ENCODE measurements at regions of chr7 and their contacts with region 1.

Region 1: DNA sequence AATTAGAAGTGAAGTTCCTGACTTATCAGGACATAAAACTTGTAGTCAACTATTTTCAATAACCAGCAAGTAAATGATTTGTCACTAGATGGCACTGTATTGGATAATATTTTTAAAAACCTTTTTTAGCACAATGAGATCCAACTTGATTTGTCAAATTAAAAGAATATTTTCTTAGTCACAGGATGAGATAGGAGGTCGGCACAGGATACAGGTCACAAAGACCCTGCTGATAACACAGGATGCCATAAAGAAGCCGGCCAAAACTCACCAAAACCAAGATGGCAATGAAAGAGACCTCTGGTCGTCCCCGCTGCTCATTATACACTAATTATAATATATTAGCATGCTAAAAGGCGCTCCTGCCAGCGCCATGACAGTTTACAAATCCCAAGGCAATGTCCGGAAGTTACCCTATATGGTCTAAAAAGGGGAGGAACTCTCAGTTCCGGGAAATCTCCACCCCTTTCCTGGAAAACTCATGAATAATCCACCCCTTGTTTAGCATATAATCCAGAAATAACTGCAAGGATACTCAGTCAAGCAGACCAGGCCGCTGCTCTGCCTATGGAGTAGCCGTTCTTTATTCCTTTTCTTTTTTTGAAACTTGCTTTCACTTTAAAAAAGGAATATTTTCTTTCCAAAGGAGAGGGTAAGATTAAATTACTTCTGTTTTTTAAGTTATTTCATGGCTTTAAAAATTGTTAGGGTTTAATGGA is 255.7 kb upstream of the MKLN1 start:
- DNase-seq: no peak
- ATAC-seq: no peak
- H3K4me3 ChIP-seq: no peak overlapping the region
- H3K4me3 Mint-ChIP-seq: peak overlapping the region in 5 of 10 donors; percentile 14 to 54 (median 45)
- H3K27ac ChIP-seq: no peak overlapping the region
- H3K27ac Mint-ChIP-seq: peak overlapping the region in 7 of 9 donors; percentile 39 to 67 (median 52)
- H3K4me1 ChIP-seq: peaks cover 39 to 69% of the 10 kb centered on the region in 2 donors
- H3K4me1 Mint-ChIP-seq: peaks cover 33 to 72% (median 55%) of the 10 kb centered on the region in 7 donors
- H3K27me3 ChIP-seq: no peaks in the 10 kb centered on the region
- H3K27me3 Mint-ChIP-seq: no peaks in the 10 kb centered on the region

Region 2: DNA sequence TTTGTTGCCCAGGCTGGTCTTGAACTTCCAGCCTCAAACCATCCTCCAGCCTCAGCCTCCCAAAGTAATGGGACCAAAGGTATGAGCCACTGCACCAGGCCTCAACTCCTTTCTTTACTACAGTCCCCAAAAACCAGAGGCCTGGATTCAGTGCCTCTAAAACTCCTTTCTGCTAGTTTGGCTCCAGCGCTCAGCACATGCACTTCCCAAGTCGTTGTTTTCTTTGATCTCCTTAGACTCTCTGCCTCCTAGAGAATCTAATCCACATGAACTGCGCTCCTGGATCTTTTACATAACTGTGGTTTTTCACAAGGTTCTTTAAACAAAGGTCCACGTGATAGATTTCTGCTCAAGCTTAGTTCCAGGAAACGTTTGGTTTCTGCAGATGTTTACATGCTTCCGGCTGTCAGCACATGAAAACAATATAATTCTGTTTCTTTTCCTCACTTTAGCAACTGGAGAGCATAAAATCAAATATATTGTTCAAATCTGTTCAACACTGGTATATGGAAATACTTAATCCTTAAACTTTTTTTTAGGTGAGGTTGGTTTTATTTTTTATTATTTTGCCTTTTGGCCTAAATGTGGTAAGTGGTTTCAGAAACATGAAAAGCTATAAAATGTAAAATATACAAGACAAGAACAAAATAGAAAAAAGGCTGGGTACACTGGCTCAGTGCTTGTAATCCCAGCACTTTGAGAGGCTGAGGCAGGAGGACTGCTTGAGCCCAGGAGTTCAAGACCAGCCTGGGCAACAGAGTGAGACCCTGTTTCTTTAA is 14.7 kb before region 1 on chr7:
- CTCF ChIA-PET with region 1: interaction called, 3 read pairs
- POLR2A ChIA-PET with region 1: interaction called, 6 read pairs
- intact Hi-C with region 1: loop called in 1 of 2 experiments (anchors 2 kb)
- DNase-seq: peak in 7 of 9 donors; percentile 56 to 82 (median 76)
- ATAC-seq: peak; percentile 67
- H3K4me3 ChIP-seq: peak overlapping the region; percentile 11
- H3K4me3 Mint-ChIP-seq: peak overlapping the region; percentile 72 to 93 (median 82)
- H3K27ac ChIP-seq: peak overlapping the region; percentile 76
- H3K27ac Mint-ChIP-seq: peak overlapping the region; percentile 94 to 100 (median 98)
- H3K4me1 ChIP-seq: peaks cover 69 to 77% of the 10 kb centered on the region in 2 donors
- H3K4me1 Mint-ChIP-seq: peaks cover 54 to 87% (median 72%) of the 10 kb centered on the region in 7 donors
- H3K27me3 ChIP-seq: no peaks in the 10 kb centered on the region
- H3K27me3 Mint-ChIP-seq: no peaks in the 10 kb centered on the region

Region 3: GRCh38 chr7:131090886-131091692 is 19.1 kb after region 1 on chr7:
- CTCF ChIA-PET with region 1: no interaction called
- POLR2A ChIA-PET with region 1: interaction called, 3 read pairs
- intact Hi-C with region 1: loop called in 1 of 2 experiments (anchors 2 kb)
- DNase-seq: no peak
- ATAC-seq: peak; percentile 18
- H3K4me3 ChIP-seq: no peak overlapping the region
- H3K4me3 Mint-ChIP-seq: peak overlapping the region in 9 of 10 donors; percentile 1 to 55 (median 23)
- H3K27ac ChIP-seq: no peak overlapping the region
- H3K27ac Mint-ChIP-seq: peak overlapping the region in 7 of 9 donors; percentile 8 to 81 (median 60)
- H3K4me1 ChIP-seq: peaks cover 22 to 39% of the 10 kb centered on the region in 2 donors
- H3K4me1 Mint-ChIP-seq: peaks cover 20 to 90% (median 73%) of the 10 kb centered on the region in 7 donors
- H3K27me3 ChIP-seq: no peaks in the 10 kb centered on the region
- H3K27me3 Mint-ChIP-seq: no peaks in the 10 kb centered on the region

Region 4: GRCh38 chr7:131151034-131151433 is 79.1 kb after region 1 on chr7:
- CTCF ChIA-PET with region 1: no interaction called
- POLR2A ChIA-PET with region 1: no interaction called
- intact Hi-C with region 1: no loop called
- DNase-seq: no peak
- ATAC-seq: no peak
- H3K4me3 ChIP-seq: no peak overlapping the region
- H3K4me3 Mint-ChIP-seq: no peak overlapping the region
- H3K27ac ChIP-seq: no peak overlapping the region
- H3K27ac Mint-ChIP-seq: no peak overlapping the region
- H3K4me1 ChIP-seq: no peaks in the 10 kb centered on the region
- H3K4me1 Mint-ChIP-seq: peaks cover 0 to 5% (median 0%) of the 10 kb centered on the region in 7 donors
- H3K27me3 ChIP-seq: no peaks in the 10 kb centered on the region
- H3K27me3 Mint-ChIP-seq: peaks cover 0 to 27% (median 0%) of the 10 kb centered on the region in 5 donors

Region 5: DNA sequence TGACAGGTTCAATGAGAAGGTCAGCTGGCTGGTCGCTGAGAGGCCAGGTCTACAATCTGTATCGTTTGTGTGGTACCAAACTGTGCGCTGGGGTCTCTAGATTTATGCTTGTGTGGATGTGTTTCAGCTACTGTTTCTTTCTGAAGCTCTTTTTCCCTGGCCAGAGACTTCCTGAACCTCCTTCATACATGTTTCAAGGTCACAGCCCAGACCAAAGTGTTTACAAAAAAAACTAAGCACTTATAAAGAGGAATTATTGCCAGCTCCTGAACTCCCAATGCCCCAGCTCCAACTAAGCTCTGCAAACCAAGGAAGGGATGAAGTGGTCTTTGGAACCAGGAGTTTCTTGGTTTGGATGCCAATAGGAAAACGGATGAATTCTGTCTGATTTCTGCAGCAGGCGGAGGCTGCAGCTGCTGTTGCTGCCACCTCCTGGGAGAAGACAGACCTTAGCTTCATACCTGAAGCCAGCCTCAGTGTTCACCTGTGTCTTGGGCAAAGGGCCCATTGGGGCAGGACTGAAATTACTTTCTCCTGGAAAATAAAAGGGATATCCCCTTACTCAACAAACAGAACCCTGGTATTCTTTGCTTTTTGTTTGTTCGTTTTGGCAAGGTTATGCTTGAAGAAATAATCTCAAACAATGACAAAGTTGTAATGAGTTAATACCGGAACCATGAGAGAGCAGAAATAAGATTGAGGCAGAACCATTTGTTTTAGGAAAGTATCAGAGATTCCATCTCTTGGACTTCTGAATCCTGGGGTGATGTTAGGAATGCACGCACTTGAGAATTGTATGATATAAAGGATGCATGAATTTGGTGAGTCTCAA is 231.1 kb after region 1 on chr7:
- CTCF ChIA-PET with region 1: interaction called, 4 read pairs
- POLR2A ChIA-PET with region 1: no interaction called
- intact Hi-C with region 1: loop called (anchors 1 kb)
- DNase-seq: peak in 6 of 9 donors; percentile 16 to 34 (median 24)
- ATAC-seq: peak; percentile 45
- H3K4me3 ChIP-seq: no peak overlapping the region
- H3K4me3 Mint-ChIP-seq: no peak overlapping the region
- H3K27ac ChIP-seq: no peak overlapping the region
- H3K27ac Mint-ChIP-seq: peak overlapping the region in 1 of 9 donors; percentile 68
- H3K4me1 ChIP-seq: no peaks in the 10 kb centered on the region
- H3K4me1 Mint-ChIP-seq: no peaks in the 10 kb centered on the region
- H3K27me3 ChIP-seq: no peaks in the 10 kb centered on the region
- H3K27me3 Mint-ChIP-seq: peaks cover 0 to 4% (median 0%) of the 10 kb centered on the region in 5 donors

Region 6: GRCh38 chr7:131327626-131328376 is 255.9 kb after region 1 on chr7 and contains the start of gene MKLN1:
- CTCF ChIA-PET with region 1: interaction called, 3 read pairs
- POLR2A ChIA-PET with region 1: interaction called, 7 read pairs
- intact Hi-C with region 1: loop called in 1 of 2 experiments (anchors 2 kb)
- DNase-seq: peak; percentile 82 to 91 (median 86)
- ATAC-seq: peak; percentile 99
- H3K4me3 ChIP-seq: peak within 1 kb of the TSS; percentile 88
- H3K4me3 Mint-ChIP-seq: peak within 1 kb of the TSS; percentile 88 to 100 (median 94)
- H3K27ac ChIP-seq: peak within 1 kb of the TSS; percentile 94
- H3K27ac Mint-ChIP-seq: peak within 1 kb of the TSS; percentile 86 to 99 (median 97)
- H3K4me1 ChIP-seq: peaks cover 26 to 43% of the 10 kb centered on the region in 2 donors
- H3K4me1 Mint-ChIP-seq: peaks cover 35 to 85% (median 71%) of the 10 kb centered on the region in 7 donors
- H3K27me3 ChIP-seq: no peaks in the 10 kb centered on the region
- H3K27me3 Mint-ChIP-seq: no peaks in the 10 kb centered on the region
- total RNA-seq, gene MKLN1: 42.0 to 69.8 (median 59.3) TPM

Region 7: GRCh38 chr7:131424219-131424822 is 352.4 kb after region 1 on chr7:
- CTCF ChIA-PET with region 1: interaction called, 3 read pairs
- POLR2A ChIA-PET with region 1: no interaction called
- intact Hi-C with region 1: loop called (anchors 1 kb)
- DNase-seq: peak in 7 of 9 donors; percentile 18 to 50 (median 44)
- ATAC-seq: peak; percentile 90
- H3K4me3 ChIP-seq: no peak overlapping the region
- H3K4me3 Mint-ChIP-seq: no peak overlapping the region
- H3K27ac ChIP-seq: no peak overlapping the region
- H3K27ac Mint-ChIP-seq: peak overlapping the region in 2 of 9 donors; percentile 11
- H3K4me1 ChIP-seq: no peaks in the 10 kb centered on the region
- H3K4me1 Mint-ChIP-seq: peaks cover 0 to 20% (median 13%) of the 10 kb centered on the region in 7 donors
- H3K27me3 ChIP-seq: no peaks in the 10 kb centered on the region
- H3K27me3 Mint-ChIP-seq: no peaks in the 10 kb centered on the region

Region 8: DNA sequence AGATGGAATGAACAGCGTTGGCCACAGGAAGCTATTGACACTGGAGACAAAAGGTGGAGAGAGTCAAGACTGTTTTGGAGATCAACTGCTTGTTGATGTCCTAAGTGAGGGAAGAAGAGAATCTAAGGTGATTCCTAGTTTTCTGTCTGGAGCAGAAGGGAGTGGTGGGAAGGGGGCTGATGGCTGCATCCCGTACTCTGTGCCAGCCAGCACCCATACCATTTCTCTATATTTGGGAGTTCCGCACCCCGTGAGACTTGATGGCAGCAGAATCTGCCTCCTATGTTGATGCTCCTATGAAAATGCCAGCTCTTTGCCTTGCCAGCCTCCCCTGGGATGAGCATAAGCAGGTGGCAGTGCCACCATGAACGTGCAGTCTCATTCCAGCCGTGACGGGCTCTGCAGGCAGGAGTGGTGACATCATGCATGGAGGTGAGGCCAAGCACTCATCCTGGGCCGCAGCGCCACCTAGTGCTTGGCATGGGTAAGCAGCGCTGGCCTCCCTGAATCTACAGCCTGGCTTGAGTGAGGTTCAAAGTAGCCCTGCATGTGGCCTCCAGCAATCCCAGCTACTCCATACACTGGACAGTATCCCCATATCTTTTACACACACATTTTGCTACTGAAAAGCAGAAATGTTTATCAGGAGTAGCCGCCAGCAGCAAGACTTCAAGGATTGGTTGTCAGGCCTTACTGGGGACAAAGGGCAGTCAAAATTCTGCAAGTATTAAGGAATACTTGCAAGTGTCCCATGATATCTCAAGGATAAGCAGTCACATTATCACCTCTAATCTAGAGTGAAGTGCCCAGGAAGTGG is 441.5 kb after region 1 on chr7:
- CTCF ChIA-PET with region 1: no interaction called
- POLR2A ChIA-PET with region 1: no interaction called
- intact Hi-C with region 1: loop called (anchors 1 to 2 kb)
- DNase-seq: peak; percentile 39 to 80 (median 65)
- ATAC-seq: peak; percentile 98
- H3K4me3 ChIP-seq: no peak overlapping the region
- H3K4me3 Mint-ChIP-seq: peak overlapping the region in 5 of 10 donors; percentile 33 to 65 (median 47)
- H3K27ac ChIP-seq: no peak overlapping the region
- H3K27ac Mint-ChIP-seq: peak overlapping the region in 3 of 9 donors; percentile 1 to 27 (median 21)
- H3K4me1 ChIP-seq: peaks cover 0 to 4% of the 10 kb centered on the region in 2 donors
- H3K4me1 Mint-ChIP-seq: peaks cover 11 to 22% (median 19%) of the 10 kb centered on the region in 7 donors
- H3K27me3 ChIP-seq: no peaks in the 10 kb centered on the region
- H3K27me3 Mint-ChIP-seq: peaks cover 0 to 13% (median 3%) of the 10 kb centered on the region in 5 donors